Activated CD4-positive, alpha-beta T cell treated with anti-CD3 and anti-CD28 coated beads for 36 hours (primary cell): ENCODE measurements at regions of chr6 and their contacts with region 1.

Region 1: DNA sequence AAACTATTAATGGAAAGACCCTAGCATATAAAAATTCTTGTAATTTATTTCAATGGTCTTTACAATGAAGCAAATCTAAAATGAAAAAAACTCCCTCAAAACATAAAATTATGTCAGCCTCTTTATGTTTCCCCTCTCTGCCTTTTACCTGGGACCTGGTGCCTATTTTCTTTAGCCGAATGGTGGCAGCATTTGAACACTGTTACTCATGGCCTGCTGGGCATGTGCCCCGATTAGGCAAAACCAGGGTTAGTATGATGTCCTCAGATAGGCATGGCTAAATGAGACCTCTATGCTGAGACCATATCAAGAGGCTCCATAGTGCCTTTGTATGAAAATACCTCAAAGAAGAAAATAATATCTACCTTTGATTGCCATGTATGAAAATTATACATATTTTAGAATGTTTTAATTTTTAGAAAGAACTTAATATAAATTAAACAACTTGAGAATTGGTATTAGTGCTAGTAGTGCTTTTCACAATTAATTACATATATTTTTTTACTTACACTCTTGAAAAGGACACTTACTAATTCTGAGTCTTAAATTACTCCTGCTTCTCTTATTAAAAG is 22.5 kb upstream of the C6orf58 start:
- DNase-seq: peak; percentile 36
- ATAC-seq: peak; percentile 42
- H3K4me3 Mint-ChIP-seq: no peak overlapping the region
- H3K27ac Mint-ChIP-seq: no peak overlapping the region
- H3K4me1 Mint-ChIP-seq: no peaks in the 10 kb centered on the region
- H3K27me3 Mint-ChIP-seq: peaks cover 26% of the 10 kb centered on the region

Region 2: DNA sequence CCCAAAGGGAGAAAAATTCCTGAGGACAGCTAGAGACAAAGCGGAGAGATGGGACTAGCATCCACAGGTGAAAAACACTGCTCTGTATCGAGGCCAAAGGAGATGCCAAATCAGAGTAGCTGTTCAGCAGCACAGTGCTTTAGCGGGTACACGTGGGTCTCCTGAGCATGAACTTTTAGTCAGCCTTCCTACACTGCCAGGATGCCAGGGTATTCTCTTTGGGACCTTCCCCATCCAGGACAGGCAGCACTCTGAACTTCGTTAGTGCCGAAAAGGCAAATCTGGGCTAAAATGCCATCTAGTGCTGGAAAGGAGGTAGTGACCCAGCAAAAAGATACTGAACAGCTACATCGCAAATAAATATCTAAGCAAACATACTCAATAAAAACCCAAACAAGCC is 87.4 kb after region 1 on chr6:
- CTCF ChIA-PET with region 1: no interaction called
- POLR2A ChIA-PET with region 1: no interaction called
- intact Hi-C with region 1: loop called (anchors 1 kb)
- DNase-seq: peak; percentile 14
- ATAC-seq: no peak
- H3K4me3 Mint-ChIP-seq: no peak overlapping the region
- H3K27ac Mint-ChIP-seq: no peak overlapping the region
- H3K4me1 Mint-ChIP-seq: no peaks in the 10 kb centered on the region
- H3K27me3 Mint-ChIP-seq: peaks cover 4% of the 10 kb centered on the region

Region 3: GRCh38 chr6:128731249-128732165 is 1177.0 kb after region 1 on chr6:
- CTCF ChIA-PET with region 1: no interaction called
- POLR2A ChIA-PET with region 1: no interaction called
- intact Hi-C with region 1: loop called in 1 of 2 experiments (anchors 5 kb)
- DNase-seq: peak; percentile 5
- ATAC-seq: no peak
- H3K4me3 Mint-ChIP-seq: no peak overlapping the region
- H3K27ac Mint-ChIP-seq: no peak overlapping the region
- H3K4me1 Mint-ChIP-seq: no peaks in the 10 kb centered on the region
- H3K27me3 Mint-ChIP-seq: peaks cover 18% of the 10 kb centered on the region